Ascending aorta (tissue), 2 donors: ENCODE measurements at regions of chr22 and their contacts with region 1.

Region 1: GRCh38 chr22:39532215-39533071 is at the start of gene RPS19BP1:
- DNase-seq: peak; percentile 99 to 100
- H3K4me3 ChIP-seq: peak within 1 kb of the TSS; percentile 89 to 95
- H3K27ac ChIP-seq: peak within 1 kb of the TSS; percentile 85 to 91
- H3K4me1 ChIP-seq: peaks cover 16 to 42% of the 10 kb centered on the region in 2 donors
- H3K27me3 ChIP-seq: no peaks in the 10 kb centered on the region
- CTCF ChIP-seq: peak in 1 of 3 experiments; percentile 9
- total RNA-seq, gene RPS19BP1: 218 TPM

Region 2: DNA sequence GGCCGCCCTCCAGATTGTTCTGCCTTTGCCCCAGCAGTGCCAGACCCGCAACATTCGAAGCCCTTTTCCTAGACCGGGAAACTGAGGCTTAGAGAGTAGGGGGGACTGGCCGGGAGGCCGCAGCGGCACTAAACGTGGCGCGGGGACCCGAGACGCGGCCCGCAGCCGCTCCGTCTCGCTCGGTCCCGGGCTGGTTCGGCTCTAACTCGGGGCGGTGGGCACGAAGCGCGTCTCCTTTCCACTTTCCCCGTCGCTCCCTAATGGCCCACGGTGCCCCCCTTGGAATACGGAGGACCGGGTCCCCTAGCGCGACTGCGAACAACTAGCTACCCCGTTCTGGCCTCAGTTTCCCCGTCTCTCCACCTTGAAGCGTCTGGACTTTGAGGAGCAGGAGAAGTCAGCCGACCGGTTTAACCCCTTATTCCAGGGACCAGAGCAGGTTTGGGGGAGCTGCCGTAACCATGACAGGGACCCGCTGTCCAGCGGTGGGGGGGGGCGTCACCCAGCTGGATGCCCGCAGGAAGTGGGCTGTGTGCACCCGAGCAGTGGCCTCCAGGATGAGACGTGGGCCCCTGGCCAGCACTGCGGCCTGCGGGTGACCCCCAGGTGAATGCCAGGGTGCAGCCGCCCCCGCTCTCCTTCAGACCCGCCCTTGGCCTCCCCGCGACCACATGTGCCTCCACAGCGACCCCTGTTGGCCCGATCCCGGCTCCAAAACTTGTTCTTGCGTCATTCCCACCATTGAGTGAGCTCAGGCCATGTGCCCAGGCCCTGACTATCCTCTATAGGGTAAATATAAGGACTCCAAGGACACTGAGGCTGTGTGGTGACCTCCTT is 1971.0 kb before region 1 on chr22:
- intact Hi-C with region 1: loop called (anchors 5 kb)
- DNase-seq: peak; percentile 79 to 97
- H3K4me3 ChIP-seq: peak overlapping the region; percentile 84 to 95
- H3K27ac ChIP-seq: peak overlapping the region; percentile 98 to 99
- H3K4me1 ChIP-seq: peaks cover 39 to 52% of the 10 kb centered on the region in 2 donors
- H3K27me3 ChIP-seq: no peaks in the 10 kb centered on the region
- CTCF ChIP-seq: peak; percentile 81 to 91 (median 84)

Region 3: GRCh38 chr22:39170825-39171622 is 361.4 kb before region 1 on chr22:
- intact Hi-C with region 1: loop called (anchors 5 kb)
- DNase-seq: peak in 1 of 2 donors; percentile 88
- H3K4me3 ChIP-seq: peak overlapping the region in 1 of 2 donors; percentile 31
- H3K27ac ChIP-seq: no peak overlapping the region
- H3K4me1 ChIP-seq: peaks cover 22 to 23% of the 10 kb centered on the region in 2 donors
- H3K27me3 ChIP-seq: no peaks in the 10 kb centered on the region
- CTCF ChIP-seq: peak; percentile 95 to 98 (median 96)

Region 4: GRCh38 chr22:39496131-39496838 is 36.2 kb before region 1 on chr22:
- intact Hi-C with region 1: loop called (anchors 5 kb)
- DNase-seq: no peak
- H3K4me3 ChIP-seq: no peak overlapping the region
- H3K27ac ChIP-seq: no peak overlapping the region
- H3K4me1 ChIP-seq: peaks cover under 1 to 4% of the 10 kb centered on the region in 2 donors
- H3K27me3 ChIP-seq: no peaks in the 10 kb centered on the region
- CTCF ChIP-seq: peak; percentile 65 to 74 (median 68)

Region 5: DNA sequence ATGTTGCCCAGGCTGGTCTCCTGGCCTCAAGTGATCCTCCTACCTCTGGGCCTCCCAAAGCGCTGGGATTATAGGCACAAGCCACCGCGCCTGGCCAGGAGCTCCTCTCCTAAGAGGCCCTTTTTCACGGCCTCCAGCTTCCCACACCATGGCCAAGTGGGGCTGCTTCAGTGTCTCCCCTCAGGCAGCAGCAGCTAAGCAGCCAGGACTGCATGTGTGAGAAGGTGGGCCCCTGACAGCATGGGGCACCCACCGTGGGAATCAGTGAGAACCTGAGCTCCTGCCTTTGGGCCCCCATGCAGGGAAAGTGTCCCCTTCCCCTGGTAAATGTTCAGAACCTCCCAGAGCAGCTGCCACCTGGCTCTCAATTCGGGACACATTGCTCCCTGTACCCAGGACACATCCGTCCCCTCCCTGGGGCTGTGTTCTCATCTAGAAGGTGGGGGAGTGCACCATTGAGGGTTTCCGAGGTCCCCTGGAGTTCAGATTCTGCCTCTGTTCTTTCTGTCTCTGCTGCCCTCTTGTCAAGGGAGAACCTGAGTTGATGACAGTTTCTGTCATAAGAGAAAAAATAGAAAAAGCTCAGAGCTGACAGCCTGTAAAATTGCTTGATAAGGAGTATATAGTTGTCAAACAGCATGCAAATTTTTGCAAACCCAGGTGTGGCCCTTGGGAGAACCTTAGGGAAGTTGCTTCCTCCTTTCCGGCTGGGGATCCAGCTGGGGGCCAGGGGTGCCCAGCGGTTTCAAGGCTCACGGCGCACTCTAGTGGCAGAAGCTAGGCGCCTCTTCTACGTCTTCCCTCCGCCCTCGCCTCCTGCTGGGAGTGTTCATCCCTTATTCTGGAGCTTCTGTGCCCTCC is 492.0 kb after region 1 on chr22:
- intact Hi-C with region 1: loop called (anchors 5 kb)
- DNase-seq: no peak
- H3K4me3 ChIP-seq: no peak overlapping the region
- H3K27ac ChIP-seq: no peak overlapping the region
- H3K4me1 ChIP-seq: no peaks in the 10 kb centered on the region
- H3K27me3 ChIP-seq: no peaks in the 10 kb centered on the region
- CTCF ChIP-seq: peak; percentile 49 to 76 (median 61)

Region 6: DNA sequence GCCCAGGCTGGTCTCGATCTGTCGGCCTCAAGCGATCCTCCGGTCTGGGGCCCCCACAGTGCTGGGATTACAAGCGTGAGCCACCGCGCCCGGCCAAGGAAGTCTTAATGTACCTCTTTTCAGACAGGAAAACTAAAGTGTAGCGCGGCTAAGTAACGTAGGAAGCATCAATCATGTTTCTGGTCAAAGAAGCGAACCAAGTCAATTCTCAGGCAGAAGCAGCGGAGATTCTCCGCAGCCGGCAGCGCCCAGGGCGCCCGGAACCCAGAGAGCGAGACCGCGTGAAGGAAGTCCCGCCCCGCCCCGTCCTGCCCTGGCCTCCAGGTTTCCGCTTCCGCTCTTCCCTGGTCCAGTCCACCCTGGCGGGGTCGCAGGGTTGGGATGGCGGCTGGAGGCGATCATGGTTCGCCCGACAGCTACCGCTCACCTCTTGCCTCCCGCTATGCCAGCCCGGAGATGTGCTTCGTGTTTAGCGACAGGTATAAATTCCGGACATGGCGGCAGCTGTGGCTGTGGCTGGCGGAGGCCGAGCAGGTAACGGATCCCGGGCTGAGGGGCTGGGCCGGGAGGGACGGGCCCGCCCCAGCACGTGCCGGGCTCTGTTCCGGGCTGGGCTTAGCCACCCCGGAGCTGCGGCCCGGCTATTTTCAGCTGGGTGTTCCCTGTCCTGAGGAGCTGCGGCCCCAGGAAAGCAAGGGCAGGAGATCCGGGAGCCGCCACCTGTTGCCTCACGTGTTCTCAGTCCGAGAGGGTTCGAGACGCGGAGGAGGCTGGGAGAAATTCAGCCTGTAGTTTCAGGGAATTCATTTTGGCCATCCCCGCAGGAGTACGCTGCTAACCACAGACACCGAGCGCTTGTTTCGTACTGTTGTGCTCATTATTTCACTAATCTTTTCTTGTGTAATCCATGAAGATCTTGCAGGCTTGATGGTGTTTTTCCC is 814.0 kb after region 1 on chr22 and contains the start of gene ADSL:
- intact Hi-C with region 1: loop called (anchors 5 kb)
- DNase-seq: peak; percentile 33 to 90
- H3K4me3 ChIP-seq: peak within 1 kb of the TSS; percentile 66 to 93
- H3K27ac ChIP-seq: peak within 1 kb of the TSS; percentile 66 to 90
- H3K4me1 ChIP-seq: peaks cover 9 to 19% of the 10 kb centered on the region in 2 donors
- H3K27me3 ChIP-seq: no peaks in the 10 kb centered on the region
- CTCF ChIP-seq: peak in 1 of 3 experiments; percentile 17
- total RNA-seq, gene ADSL: 31.3 TPM